PC-9 (cell line): ENCODE measurements at regions of chr7 and their contacts with region 1.

Region 1: DNA sequence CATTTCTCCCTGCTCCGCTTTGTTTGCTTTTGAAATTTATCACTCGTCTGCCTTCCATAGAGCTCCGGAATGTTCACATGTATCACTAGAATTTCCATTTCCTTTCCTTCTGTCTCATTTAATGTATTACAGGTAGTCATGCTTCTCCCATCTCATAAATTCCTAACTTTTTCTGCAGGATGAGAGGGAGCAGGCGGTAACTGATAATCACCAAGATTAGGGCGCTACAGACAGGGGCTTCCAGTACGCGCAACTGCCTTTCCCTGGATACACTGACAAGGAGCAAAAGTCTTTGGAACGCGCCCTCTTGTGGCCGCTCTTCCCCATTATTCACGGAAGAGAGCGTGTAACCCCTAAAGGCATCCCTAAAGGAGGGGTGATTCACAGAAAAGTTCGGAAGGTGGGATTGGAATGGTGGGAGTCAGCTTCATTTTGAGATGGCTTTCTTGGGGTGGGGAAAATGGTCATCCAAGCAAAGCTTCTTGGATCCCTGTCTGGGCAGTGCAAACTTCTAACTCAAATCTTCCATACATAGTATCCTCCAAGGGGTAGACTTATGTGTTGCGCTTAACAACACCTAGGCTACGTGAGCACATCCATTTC is 6.5 kb downstream of the INHBA start:
- DNase-seq: peak; percentile 68 to 80
- H3K4me3 ChIP-seq: peak overlapping the region; percentile 19; the same call in 1 of the 2 replicates
- H3K27ac ChIP-seq: no peak overlapping the region
- H3K4me1 ChIP-seq: peaks cover 24% of the 10 kb centered on the region
- H3K27me3 ChIP-seq: no peaks in the 10 kb centered on the region
- CTCF ChIP-seq: peak; percentile 75

Region 2: DNA sequence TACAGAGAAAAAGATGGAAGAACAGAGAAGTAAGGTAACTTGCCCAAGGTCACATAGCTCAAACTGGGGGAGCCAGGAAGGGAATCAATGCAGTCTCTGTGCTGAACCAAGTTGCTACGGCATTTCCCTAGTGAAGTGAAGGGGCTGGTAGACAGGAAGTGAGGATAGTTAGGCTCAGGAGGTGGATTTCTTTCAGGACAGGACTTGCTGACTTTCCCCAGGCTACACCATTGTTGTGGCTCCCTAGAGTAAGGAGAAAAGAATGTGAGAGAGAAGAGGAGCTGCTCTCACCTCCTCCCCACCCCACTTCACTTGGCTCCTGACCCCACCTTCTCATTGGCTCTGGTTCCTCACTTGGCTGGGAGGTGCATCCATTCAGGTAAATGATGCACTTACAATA is 310.4 kb before region 1 on chr7:
- CTCF ChIA-PET with region 1: no interaction called
- POLR2A ChIA-PET with region 1: no interaction called
- intact Hi-C with region 1: loop called (anchors 2 kb)
- DNase-seq: peak in 1 of 2 experiments; percentile 29
- H3K4me3 ChIP-seq: no peak overlapping the region
- H3K27ac ChIP-seq: no peak overlapping the region
- H3K4me1 ChIP-seq: no peaks in the 10 kb centered on the region
- H3K27me3 ChIP-seq: no peaks in the 10 kb centered on the region
- CTCF ChIP-seq: no peak